Mammary epithelial cell (primary cell): ENCODE measurements at regions of chr17 and their contacts with region 1.

Region 1: DNA sequence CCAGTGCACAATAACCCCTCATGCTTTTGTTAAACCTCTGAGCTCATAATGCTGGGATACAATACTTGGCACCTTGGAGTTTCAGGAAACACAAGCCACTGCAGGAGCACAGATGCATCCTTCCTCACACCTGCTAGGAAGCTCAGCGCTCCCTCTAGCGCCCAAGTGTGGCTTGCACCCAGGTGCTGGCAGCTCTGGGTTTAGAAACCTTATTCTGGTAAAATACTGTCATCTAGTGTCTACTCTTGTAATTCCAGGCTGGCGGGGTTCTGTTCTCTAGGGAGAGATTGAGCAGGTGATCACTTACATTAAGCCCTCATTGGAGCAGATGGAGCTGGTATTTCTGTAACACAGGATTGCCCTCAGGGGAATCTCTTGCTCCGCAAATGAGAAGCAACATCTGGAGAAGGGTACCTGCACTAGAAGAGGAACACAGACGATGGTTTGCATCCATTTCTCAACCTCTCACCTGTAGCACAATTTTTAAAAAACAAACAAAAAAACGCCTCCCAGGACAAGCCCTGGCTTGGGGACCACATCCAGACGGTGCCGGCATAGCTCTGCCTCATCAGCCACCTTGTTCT is 1.5 kb downstream of the CCL1 start:
- DNase-seq: peak; percentile 57
- H3K4me3 ChIP-seq: no peak overlapping the region
- H3K27ac ChIP-seq: no peak overlapping the region
- H3K4me1 ChIP-seq: no peaks in the 10 kb centered on the region
- H3K27me3 ChIP-seq: no peaks in the 10 kb centered on the region
- CTCF ChIP-seq: peak; percentile 99 to 100

Region 2: DNA sequence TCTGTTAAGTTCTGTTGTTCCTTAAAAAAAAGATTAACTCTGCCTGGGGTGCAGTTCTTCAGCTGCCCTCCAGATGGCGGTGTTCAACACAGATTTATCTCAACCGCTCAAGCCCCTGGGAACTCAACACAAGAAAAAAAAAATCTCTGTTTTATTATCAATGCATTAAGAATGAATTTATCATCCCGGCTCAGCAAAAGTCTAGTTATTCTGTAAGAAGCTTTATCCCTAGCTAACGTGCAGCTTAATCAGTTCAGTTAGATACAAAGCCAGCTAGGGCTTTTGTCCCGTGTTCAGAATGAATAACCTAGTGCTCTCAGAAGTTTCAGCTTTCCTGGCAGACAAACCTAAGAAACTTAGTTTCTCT is 582.4 kb before region 1 on chr17:
- CTCF ChIA-PET with region 1: no interaction called
- dilution Hi-C with region 1: no loop called
- in situ Hi-C with region 1: no loop called
- intact Hi-C with region 1: loop called (anchors 1 kb)
- DNase-seq: peak; percentile 8
- H3K4me3 ChIP-seq: no peak overlapping the region
- H3K27ac ChIP-seq: no peak overlapping the region
- H3K4me1 ChIP-seq: no peaks in the 10 kb centered on the region
- H3K27me3 ChIP-seq: no peaks in the 10 kb centered on the region
- CTCF ChIP-seq: peak; percentile 86 to 94

Region 3: DNA sequence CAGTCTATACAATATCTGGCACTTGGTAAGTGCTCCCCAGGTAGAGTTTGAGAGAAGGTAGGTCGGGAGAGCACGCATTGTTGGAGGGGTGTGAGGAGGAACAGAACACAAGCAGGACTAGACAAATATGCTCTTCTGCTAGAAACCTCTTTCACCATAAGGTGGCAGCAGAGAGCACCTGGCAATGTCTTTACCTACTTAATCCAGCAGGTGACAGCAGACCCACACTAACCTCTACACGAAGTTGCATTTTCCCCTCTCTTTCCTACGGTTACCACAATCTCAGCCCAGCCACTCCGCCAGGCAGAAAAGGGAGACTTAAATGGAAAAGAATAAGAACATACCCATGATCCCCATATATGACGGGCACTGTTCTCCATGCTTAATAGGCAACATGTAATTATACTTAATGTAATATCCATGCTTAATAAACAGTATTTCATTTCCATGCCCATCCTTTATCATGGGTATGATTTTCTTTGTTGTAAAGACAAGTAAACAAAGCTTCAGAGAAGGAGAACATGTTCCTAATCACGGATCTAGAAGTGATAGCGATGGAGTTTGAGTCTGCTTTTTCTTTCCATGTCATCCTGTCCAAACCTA is 161.5 kb before region 1 on chr17:
- CTCF ChIA-PET with region 1: no interaction called
- dilution Hi-C with region 1: loop called (anchors 25 kb)
- in situ Hi-C with region 1: loop called in 1 of 2 experiments (anchors 5 kb)
- intact Hi-C with region 1: loop called (anchors 1 kb)
- DNase-seq: peak; percentile 50
- H3K4me3 ChIP-seq: no peak overlapping the region
- H3K27ac ChIP-seq: no peak overlapping the region
- H3K4me1 ChIP-seq: no peaks in the 10 kb centered on the region
- H3K27me3 ChIP-seq: no peaks in the 10 kb centered on the region
- CTCF ChIP-seq: peak; percentile 100